ENCODE measurements at regions of chr2 and their contacts with region 1.

Region 1: DNA sequence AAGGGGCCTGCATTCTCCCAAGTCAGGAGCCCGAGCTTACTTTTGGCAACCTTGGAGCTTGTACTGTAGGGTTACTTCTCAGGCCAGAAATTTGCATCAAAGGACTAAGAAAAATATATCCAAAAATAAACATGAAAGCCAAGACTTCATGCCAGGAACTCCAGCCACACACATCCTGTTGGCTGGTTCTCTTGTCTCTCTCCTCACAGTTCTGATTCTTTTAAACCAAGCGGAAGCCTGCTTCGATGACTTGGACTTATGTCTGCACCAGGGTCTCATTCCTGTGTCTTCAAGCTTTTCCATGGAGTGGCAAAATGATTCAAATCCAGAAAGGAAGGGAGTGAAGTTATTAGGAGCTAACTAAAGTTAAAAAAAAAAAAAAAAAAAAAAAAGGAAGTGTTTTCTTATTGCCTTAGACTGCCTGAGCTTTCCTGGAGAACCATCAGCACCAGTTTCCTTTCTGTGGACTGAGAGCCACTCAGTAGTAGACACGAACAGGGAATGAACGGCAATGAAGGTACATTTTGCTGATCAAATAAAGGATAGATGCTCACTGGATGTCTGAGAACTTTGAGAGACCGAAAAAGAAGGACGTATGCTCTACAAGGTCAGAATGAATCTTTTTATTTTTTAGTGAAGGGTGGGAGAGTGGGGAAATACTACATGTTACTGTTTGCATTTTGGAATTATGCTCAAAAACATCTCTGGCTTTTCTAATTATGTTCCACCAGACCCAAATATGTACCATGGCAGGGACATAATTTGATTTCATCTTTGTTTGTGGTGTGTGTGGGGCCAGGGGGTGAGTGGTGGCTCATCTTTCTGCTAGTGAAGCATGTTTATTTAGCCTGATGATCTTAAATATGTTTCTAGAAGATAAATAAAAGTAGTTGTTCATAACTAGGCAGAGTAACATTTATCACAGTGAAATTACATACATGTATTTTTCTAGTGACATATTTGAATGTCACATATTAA is 86.0 kb downstream of the RAPGEF4 start:
- DNase-seq: no peak
- ATAC-seq: peak; percentile 16

Region 2: GRCh38 chr2:172280571-172281361 is 540.9 kb before region 1 on chr2:
- intact Hi-C with region 1: no loop called
- DNase-seq: peak; percentile 71
- ATAC-seq: peak; percentile 64

Region 3: DNA sequence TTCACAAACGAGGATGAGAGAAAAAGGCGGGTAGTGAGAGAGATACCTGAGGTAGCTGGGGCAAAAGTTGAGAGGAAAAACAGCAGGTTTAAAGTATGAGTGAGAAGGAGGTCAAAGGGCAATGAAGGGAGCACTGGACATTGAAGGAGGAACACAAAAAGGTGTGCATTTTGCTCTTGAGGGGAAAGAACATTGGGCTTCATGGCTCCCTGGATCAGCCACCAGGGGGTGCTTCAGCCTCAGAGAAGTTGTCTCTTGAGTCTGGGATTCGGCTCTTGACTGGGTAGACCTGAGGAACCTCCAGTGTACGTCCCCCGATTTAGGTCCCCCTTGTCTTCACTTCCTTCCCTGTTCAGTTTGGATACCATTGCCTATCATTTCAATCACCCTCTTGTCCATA is 42.5 kb after region 1 on chr2:
- intact Hi-C with region 1: loop called (anchors 5 kb)
- DNase-seq: no peak
- ATAC-seq: peak; percentile 66

Region 4: GRCh38 chr2:172953970-172954852 is 132.6 kb after region 1 on chr2:
- intact Hi-C with region 1: no loop called
- DNase-seq: no peak
- ATAC-seq: no peak

Region 5: GRCh38 chr2:173806766-173807165 is 985.1 kb after region 1 on chr2:
- intact Hi-C with region 1: no loop called
- DNase-seq: no peak
- ATAC-seq: no peak

Measured in Right ventricle myocardium inferior (tissue), 1 donor.